ENCODE measurements at regions of chr15 and their contacts with region 1.

Region 1: GRCh38 chr15:76139368-76140073 is 79.7 kb downstream of the TMEM266 start:
- DNase-seq: peak; percentile 84
- H3K4me3 Mint-ChIP-seq: no peak overlapping the region
- H3K27ac Mint-ChIP-seq: no peak overlapping the region
- H3K4me1 Mint-ChIP-seq: peaks cover 9% of the 10 kb centered on the region
- H3K27me3 Mint-ChIP-seq: peaks cover 29% of the 10 kb centered on the region

Region 2: DNA sequence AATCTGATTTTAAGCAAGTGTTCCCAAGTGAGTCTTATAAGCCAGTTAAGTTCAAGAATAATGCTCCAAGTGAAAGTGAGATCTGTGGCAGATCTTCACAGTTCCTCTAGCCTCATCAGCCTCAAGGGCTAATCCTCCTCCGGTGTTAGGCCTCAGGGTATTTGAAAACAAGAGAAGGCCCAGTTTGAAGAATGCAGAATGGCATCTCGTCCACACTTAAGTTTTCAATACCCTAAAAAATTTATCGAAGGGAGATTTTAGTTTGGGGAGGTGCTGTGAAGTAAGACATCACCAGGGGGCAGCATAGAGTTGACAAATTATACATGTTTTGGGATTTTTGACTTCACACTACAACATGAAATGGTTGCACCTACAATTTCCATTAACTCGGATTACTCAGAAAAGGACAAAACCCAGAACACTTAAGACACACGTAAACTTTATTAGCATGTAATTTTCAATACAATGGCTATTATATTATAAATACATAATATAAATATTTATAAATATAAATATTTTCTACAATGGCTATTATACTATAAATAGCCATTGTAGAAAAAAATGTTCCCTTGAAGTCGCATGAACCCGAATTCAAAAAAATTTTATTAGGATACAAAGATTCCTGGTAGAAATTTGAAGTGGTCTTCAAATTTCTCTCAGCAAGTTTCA is 82.1 kb before region 1 on chr15:
- CTCF ChIA-PET with region 1: interaction called, 18 read pairs
- POLR2A ChIA-PET with region 1: no interaction called
- DNase-seq: peak; percentile 59
- H3K4me3 Mint-ChIP-seq: no peak overlapping the region
- H3K27ac Mint-ChIP-seq: no peak overlapping the region
- H3K4me1 Mint-ChIP-seq: peaks cover 19% of the 10 kb centered on the region
- H3K27me3 Mint-ChIP-seq: peaks cover 62% of the 10 kb centered on the region

Region 3: DNA sequence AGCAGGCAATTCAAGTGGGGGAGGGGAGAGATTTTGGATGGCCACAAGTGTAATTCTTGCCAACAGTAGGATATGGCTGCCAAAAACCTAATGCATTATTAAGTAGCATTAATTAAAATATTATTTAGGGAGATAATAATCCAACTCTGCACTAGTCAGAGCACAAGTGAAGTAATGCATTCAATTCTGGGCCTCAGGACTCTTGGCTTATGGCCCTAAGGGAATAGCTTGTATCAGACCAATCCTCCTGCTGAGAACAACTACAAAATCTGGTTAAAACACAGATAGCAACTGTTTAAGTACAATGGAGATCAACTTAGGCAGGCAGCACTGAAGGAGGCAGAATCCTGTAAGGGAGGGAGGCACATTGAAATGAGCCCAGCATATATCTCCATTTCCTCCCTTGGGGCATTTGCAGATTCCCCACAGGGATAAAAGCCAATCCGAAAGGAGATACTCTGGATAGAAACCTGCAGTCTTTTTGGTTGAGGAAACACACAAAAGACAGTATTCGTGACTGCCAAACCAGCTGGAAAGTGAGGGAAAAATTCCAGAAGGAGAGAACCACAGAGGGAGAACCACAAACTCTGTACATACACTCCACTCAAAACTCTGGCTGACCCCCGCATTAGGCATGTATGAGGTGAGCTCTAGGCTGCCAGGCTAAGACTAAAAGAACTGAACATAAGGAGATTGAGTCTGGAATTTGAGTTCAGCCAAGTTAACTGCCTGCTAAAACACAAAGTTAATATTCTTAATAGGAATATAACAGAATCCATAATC is 114.4 kb after region 1 on chr15:
- CTCF ChIA-PET with region 1: no interaction called
- POLR2A ChIA-PET with region 1: no interaction called
- DNase-seq: no peak
- H3K4me3 Mint-ChIP-seq: no peak overlapping the region
- H3K27ac Mint-ChIP-seq: no peak overlapping the region
- H3K4me1 Mint-ChIP-seq: no peaks in the 10 kb centered on the region
- H3K27me3 Mint-ChIP-seq: no peaks in the 10 kb centered on the region

Measured in activated CD4-positive, alpha-beta T cell treated with anti-CD3 and anti-CD28 coated beads, Interleukin-2, amount 10 ng/mL, durations not matched to agents 7 days and 5 days (primary cell).